Psoas muscle (tissue), 8 donors: ENCODE measurements at regions of chr2 and their contacts with region 1.

Region 1: GRCh38 chr2:113248997-113249770 is 29.5 kb downstream of the PAX8 start:
- DNase-seq: peak; percentile 78 to 87
- ATAC-seq: peak; percentile 73 to 93 (median 77)
- H3K4me3 ChIP-seq: no peak overlapping the region
- H3K27ac ChIP-seq: no peak overlapping the region
- H3K4me1 ChIP-seq: no peaks in the 10 kb centered on the region
- H3K27me3 ChIP-seq: peaks cover 0 to 2% (median 0%) of the 10 kb centered on the region in 3 donors
- CTCF ChIP-seq: peak; percentile 90

Region 2: DNA sequence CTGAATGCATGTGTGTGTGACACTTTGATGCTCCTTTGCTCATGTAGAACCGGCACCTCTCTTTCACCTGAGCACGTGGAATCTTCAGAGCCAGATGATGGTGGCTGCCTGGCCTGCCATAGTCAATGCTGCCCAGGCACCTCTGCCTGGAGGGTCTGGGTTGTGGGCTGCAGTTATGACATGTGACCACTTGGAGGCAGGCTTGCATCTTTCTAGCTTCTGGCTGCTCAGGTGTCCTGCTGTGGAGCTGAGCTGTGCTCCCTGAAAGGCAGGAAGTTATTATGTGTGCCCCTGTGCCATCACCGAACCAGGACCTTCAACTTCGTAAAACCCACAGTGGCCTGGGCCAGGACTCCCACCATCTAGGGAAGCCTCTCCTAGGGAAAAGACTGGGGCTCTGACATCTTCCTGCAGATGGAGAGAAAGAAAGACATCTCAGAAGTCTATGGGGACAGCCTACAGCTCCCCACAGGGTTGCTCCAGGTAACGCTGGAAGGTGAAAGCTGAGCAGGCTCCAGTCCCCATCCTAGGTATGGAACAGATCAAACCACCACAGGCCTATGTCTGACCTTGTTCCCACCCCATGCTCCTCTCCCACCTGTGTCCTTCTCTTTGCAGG is 45.2 kb before region 1 on chr2:
- intact Hi-C with region 1: loop called in 1 of 2 experiments (anchors 5 kb)
- DNase-seq: peak; percentile 45 to 73
- ATAC-seq: peak; percentile 67 to 83 (median 82)
- H3K4me3 ChIP-seq: no peak overlapping the region
- H3K27ac ChIP-seq: no peak overlapping the region
- H3K4me1 ChIP-seq: no peaks in the 10 kb centered on the region
- H3K27me3 ChIP-seq: peaks cover 0 to 3% (median 0%) of the 10 kb centered on the region in 3 donors
- CTCF ChIP-seq: peak; percentile 71